BJ (cell line): ENCODE measurements at regions of chr2 and their contacts with region 1.

Region 1: DNA sequence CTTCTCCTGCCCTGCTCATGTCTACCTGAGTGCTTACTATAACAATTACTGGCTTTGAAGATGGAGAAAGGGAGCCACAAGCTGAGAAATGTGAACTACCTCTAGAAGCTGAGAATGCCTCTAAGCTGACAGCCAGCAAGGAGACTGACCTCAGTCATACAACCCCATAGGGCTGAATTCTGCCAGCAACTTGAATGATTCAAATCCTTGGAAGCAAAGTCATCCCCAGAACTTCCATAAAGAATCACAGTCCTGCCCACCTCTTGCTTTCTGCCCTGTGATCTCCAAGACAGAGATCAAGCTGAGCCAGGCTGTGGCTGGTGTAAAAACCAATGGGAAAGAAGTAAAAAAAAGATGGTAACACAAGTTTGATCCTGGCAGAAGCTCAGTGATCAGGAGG is 288.2 kb upstream of the SPHKAP start:
- DNase-seq: no peak
- H3K4me3 ChIP-seq: no peak overlapping the region
- H3K27me3 ChIP-seq: no peaks in the 10 kb centered on the region
- CTCF ChIP-seq: no peak

Region 2: DNA sequence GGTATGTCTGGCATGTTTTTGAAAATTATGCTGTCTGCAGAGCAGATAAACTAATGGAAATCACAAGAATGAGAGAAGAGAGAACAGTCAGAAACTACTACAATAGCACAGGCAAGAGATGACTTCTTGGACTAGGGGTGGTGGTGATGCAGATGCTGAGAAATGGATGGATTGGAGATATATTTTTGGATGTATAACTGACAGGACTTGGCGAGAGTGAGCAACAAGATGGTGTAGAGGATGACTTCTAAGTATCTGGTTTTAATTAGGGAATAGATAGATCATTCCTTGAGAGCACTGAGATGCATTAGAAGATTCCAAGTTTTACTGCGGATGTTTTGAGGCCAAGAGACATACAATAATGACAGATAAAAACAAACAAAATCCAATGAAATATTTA is 473.1 kb after region 1 on chr2:
- CTCF ChIA-PET with region 1: no interaction called
- POLR2A ChIA-PET with region 1: no interaction called
- DNase-seq: no peak
- H3K4me3 ChIP-seq: no peak overlapping the region
- H3K27me3 ChIP-seq: no peaks in the 10 kb centered on the region
- CTCF ChIP-seq: no peak

Region 3: GRCh38 chr2:229057976-229058553 is 588.3 kb after region 1 on chr2:
- CTCF ChIA-PET with region 1: no interaction called
- POLR2A ChIA-PET with region 1: interaction called, 14 read pairs
- DNase-seq: no peak
- H3K4me3 ChIP-seq: no peak overlapping the region
- H3K27me3 ChIP-seq: no peaks in the 10 kb centered on the region
- CTCF ChIP-seq: no peak